ENCODE measurements at regions of chr4 and their contacts with region 1.

Region 1: GRCh38 chr4:78551479-78552351 is at the start of gene ANXA3:
- DNase-seq: peak; percentile 87 to 90
- H3K4me3 ChIP-seq: peak within 1 kb of the TSS; percentile 74
- H3K4me3 Mint-ChIP-seq: peak within 1 kb of the TSS; percentile 86
- H3K27ac Mint-ChIP-seq: peak within 1 kb of the TSS; percentile 90
- H3K4me1 ChIP-seq: peaks cover 55% of the 10 kb centered on the region
- H3K4me1 Mint-ChIP-seq: peaks cover 27% of the 10 kb centered on the region
- H3K27me3 ChIP-seq: no peaks in the 10 kb centered on the region
- H3K27me3 Mint-ChIP-seq: no peaks in the 10 kb centered on the region
- CTCF ChIP-seq: no peak
- total RNA-seq, gene ANXA3: 327 and 361 TPM in 2 replicates

Region 2: DNA sequence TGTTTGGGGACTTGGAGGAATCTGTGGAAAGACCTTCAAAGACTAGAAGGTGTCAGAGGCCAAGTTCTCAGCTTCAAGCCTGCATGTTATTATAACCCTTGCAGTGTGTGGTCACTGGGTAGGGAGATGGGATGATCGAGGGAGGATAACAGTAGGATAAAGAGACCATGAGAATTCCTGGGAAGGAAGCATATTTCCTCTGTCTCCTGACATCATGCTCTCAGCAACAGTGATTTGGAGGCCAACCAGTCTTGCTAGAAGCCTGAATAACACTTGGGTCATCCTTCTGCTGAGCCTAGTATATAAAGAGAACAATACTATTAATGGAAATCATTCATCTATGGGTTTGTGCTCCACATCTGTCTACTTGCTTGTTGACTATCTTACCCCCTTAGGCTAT is 41.0 kb before region 1 on chr4:
- CTCF ChIA-PET with region 1: no interaction called
- POLR2A ChIA-PET with region 1: no interaction called
- intact Hi-C with region 1: no loop called
- DNase-seq: no peak
- H3K4me3 ChIP-seq: no peak overlapping the region
- H3K4me3 Mint-ChIP-seq: no peak overlapping the region
- H3K27ac Mint-ChIP-seq: no peak overlapping the region
- H3K4me1 ChIP-seq: peaks cover 11% of the 10 kb centered on the region
- H3K4me1 Mint-ChIP-seq: no peaks in the 10 kb centered on the region
- H3K27me3 ChIP-seq: no peaks in the 10 kb centered on the region
- H3K27me3 Mint-ChIP-seq: no peaks in the 10 kb centered on the region
- CTCF ChIP-seq: no peak

Region 3: GRCh38 chr4:78569291-78569821 is 17.6 kb after region 1 on chr4:
- CTCF ChIA-PET with region 1: no interaction called
- POLR2A ChIA-PET with region 1: interaction called, 48 read pairs
- intact Hi-C with region 1: loop called (anchors 1 kb)
- DNase-seq: peak; percentile 65 to 70
- H3K4me3 ChIP-seq: no peak overlapping the region
- H3K4me3 Mint-ChIP-seq: peak overlapping the region; percentile 46
- H3K27ac Mint-ChIP-seq: peak overlapping the region; percentile 85
- H3K4me1 ChIP-seq: peaks cover 63% of the 10 kb centered on the region
- H3K4me1 Mint-ChIP-seq: peaks cover 40% of the 10 kb centered on the region
- H3K27me3 ChIP-seq: no peaks in the 10 kb centered on the region
- H3K27me3 Mint-ChIP-seq: no peaks in the 10 kb centered on the region
- CTCF ChIP-seq: no peak

Region 4: DNA sequence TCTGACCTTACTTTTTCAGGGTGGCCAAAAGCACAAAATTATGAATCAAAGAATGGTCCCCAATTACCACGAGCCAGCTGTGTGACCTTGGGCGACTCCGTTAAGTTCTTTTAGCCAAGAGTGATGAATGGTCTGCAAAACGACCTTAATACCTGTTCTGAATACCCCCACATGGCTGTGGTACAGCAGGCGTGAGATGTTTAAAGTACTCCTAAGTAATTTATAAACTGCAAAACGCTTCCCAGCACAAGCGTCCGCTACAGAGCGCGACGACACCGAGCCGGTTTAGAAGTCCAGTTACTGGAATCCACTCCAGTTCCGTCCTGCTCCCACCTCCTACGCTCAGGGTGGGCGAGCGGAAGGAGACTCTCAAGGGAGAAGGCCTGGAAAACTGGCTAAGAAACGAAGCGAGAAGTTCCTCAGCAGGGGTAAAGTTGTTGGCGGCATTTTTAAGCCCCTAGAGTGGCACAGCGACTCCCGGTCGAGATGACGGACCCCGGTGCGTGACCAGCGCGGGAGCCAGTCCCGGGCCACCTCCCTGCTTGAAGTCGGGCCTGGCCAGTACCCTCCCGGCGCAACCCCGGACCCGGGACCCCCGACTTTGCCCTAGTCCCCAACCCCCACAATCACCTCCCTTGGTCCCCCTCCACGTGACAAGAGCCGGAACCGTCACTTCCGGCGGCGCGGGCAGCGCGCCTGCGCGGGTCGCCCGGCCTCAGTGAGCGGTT is 223.8 kb after region 1 on chr4:
- CTCF ChIA-PET with region 1: no interaction called
- POLR2A ChIA-PET with region 1: interaction called, 6 read pairs
- intact Hi-C with region 1: loop called (anchors 5 kb)
- DNase-seq: peak; percentile 83 to 86
- H3K4me3 ChIP-seq: peak overlapping the region; percentile 57
- H3K4me3 Mint-ChIP-seq: peak overlapping the region; percentile 93
- H3K27ac Mint-ChIP-seq: peak overlapping the region; percentile 93
- H3K4me1 ChIP-seq: peaks cover 25% of the 10 kb centered on the region
- H3K4me1 Mint-ChIP-seq: no peaks in the 10 kb centered on the region
- H3K27me3 ChIP-seq: no peaks in the 10 kb centered on the region
- H3K27me3 Mint-ChIP-seq: no peaks in the 10 kb centered on the region
- CTCF ChIP-seq: no peak